ENCODE measurements at regions of chr19 and their contacts with region 1.

Region 1: GRCh38 chr19:54390942-54391577 is 24.2 kb upstream of the TTYH1 start:
- DNase-seq: peak; percentile 77
- ATAC-seq: peak; percentile 67
- H3K4me3 Mint-ChIP-seq: no peak overlapping the region
- H3K27ac Mint-ChIP-seq: peak overlapping the region; percentile 21; the same call in 1 of the 2 replicates
- H3K4me1 Mint-ChIP-seq: peaks cover 26% of the 10 kb centered on the region
- H3K27me3 Mint-ChIP-seq: peaks cover 43% of the 10 kb centered on the region
- CTCF ChIP-seq: peak; percentile 73

Region 2: DNA sequence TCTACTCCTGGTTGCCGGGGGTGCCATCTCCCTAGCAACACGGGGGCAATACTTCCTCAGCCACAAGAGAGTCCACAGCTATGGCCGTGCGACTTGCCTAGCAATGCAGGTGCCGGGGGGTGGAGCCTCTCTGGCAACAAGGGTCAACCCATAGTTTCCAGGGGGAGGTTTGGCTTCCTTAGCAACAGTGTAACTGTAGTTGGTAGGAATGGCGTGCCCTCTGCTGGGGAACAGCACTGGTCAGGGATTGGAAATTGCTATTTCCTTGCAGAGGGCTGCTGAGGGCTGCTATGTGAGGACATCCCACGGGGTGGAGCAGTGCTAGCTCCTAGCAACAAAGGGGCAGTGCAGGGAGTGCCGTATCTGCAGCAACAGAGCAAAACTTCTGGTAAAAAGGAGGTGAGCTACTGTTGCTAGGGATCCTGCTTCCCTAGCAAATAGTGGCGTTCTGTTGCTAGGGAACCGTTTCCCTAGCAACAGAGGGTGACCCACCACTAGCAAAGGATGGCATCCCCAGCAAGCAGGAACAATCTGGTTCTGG is 211.1 kb before region 1 on chr19:
- CTCF ChIA-PET with region 1: interaction called, 13 read pairs
- POLR2A ChIA-PET with region 1: no interaction called
- DNase-seq: peak; percentile 94
- ATAC-seq: peak; percentile 95
- H3K4me3 Mint-ChIP-seq: no peak overlapping the region
- H3K27ac Mint-ChIP-seq: peak overlapping the region; percentile 63
- H3K4me1 Mint-ChIP-seq: peaks cover 14% of the 10 kb centered on the region
- H3K27me3 Mint-ChIP-seq: no peaks in the 10 kb centered on the region
- CTCF ChIP-seq: no peak

Region 3: GRCh38 chr19:54218960-54219661 is 171.9 kb before region 1 on chr19:
- CTCF ChIA-PET with region 1: no interaction called
- POLR2A ChIA-PET with region 1: no interaction called
- DNase-seq: no peak
- ATAC-seq: no peak
- H3K4me3 Mint-ChIP-seq: no peak overlapping the region
- H3K27ac Mint-ChIP-seq: no peak overlapping the region
- H3K4me1 Mint-ChIP-seq: peaks cover 13% of the 10 kb centered on the region
- H3K27me3 Mint-ChIP-seq: no peaks in the 10 kb centered on the region
- CTCF ChIP-seq: no peak

Region 4: DNA sequence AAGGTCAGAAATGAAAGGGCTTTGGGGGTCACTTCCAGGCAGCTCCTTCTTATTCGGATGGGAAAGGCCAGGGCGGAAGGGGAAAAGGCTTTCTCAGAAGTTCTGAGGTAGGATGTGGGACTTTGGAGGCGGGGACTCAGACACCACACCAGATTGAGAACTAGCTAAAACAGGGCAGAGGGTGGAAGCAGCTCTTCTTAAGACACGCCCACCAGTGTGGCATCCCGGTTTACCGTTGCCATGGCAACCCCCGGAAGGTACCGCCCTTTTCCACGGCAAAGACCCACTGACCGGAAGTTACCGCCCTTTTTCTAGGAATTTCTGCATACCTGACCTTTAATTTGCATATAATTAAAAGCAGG is 74.3 kb before region 1 on chr19:
- CTCF ChIA-PET with region 1: interaction called, 29 read pairs
- POLR2A ChIA-PET with region 1: no interaction called
- DNase-seq: peak; percentile 86
- ATAC-seq: peak; percentile 91
- H3K4me3 Mint-ChIP-seq: no peak overlapping the region
- H3K27ac Mint-ChIP-seq: no peak overlapping the region
- H3K4me1 Mint-ChIP-seq: peaks cover 12% of the 10 kb centered on the region
- H3K27me3 Mint-ChIP-seq: peaks cover 21% of the 10 kb centered on the region
- CTCF ChIP-seq: no peak

Region 5: GRCh38 chr19:54357381-54357780 is 33.7 kb before region 1 on chr19:
- CTCF ChIA-PET with region 1: interaction called, 21 read pairs
- POLR2A ChIA-PET with region 1: no interaction called
- DNase-seq: no peak
- ATAC-seq: no peak
- H3K4me3 Mint-ChIP-seq: no peak overlapping the region
- H3K27ac Mint-ChIP-seq: no peak overlapping the region
- H3K4me1 Mint-ChIP-seq: peaks cover 15% of the 10 kb centered on the region
- H3K27me3 Mint-ChIP-seq: peaks cover 6% of the 10 kb centered on the region
- CTCF ChIP-seq: no peak

Region 6: GRCh38 chr19:54430306-54431254 is 39.5 kb after region 1 on chr19:
- CTCF ChIA-PET with region 1: interaction called, 53 read pairs
- POLR2A ChIA-PET with region 1: no interaction called
- DNase-seq: peak; percentile 81
- ATAC-seq: peak; percentile 85
- H3K4me3 Mint-ChIP-seq: peak overlapping the region; percentile 67
- H3K27ac Mint-ChIP-seq: no peak overlapping the region; the same call in 1 of the 2 replicates
- H3K4me1 Mint-ChIP-seq: peaks cover 29% of the 10 kb centered on the region
- H3K27me3 Mint-ChIP-seq: peaks cover 53% of the 10 kb centered on the region
- CTCF ChIP-seq: no peak

Region 7: GRCh38 chr19:54502518-54503048 is 111.5 kb after region 1 on chr19 and contains the start of gene LAIR2:
- CTCF ChIA-PET with region 1: no interaction called
- POLR2A ChIA-PET with region 1: no interaction called
- DNase-seq: no peak
- ATAC-seq: no peak
- H3K4me3 Mint-ChIP-seq: no peak within 1 kb of the TSS
- H3K27ac Mint-ChIP-seq: no peak within 1 kb of the TSS
- H3K4me1 Mint-ChIP-seq: no peaks in the 10 kb centered on the region
- H3K27me3 Mint-ChIP-seq: peaks cover 12% of the 10 kb centered on the region
- CTCF ChIP-seq: no peak
- total RNA-seq, gene LAIR2: not detected in 3 replicates

Measured in WTC11 (cell line).